ENCODE measurements at regions of chr7 and their contacts with region 1.

Region 1: DNA sequence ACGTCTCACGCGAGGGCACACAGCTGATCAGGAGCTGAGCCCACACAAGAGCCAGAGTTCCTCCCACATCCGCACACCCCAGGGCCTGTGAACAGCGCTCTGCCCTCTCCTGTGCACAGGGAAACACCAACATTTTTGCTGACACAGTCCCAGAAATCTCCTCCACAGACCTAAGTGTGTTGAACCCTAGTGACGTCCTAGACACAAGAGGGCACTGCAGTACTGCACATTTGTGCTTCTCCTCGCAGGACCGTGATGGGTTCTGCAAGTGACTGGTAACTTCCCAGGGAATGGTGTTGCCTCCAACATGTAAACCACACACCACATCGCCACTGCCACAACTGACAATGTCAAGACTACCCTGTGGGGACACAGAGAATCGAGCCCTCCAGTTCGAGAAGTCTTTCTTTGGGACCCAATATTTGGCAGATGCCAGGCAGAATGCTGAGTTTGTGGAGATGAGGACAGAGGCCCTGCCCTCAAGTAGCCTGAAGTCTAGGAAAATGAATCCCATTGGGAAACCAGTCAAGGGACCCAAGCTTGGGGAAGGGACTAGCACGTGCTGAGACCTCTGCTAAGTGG is 170.3 kb downstream of the PAXIP1 start:
- DNase-seq: no peak
- ATAC-seq: peak; percentile 86
- H3K4me3 ChIP-seq: no peak overlapping the region
- H3K27ac ChIP-seq: no peak overlapping the region
- H3K4me1 ChIP-seq: peaks cover 4% of the 10 kb centered on the region
- H3K27me3 ChIP-seq: no peaks in the 10 kb centered on the region; a peak in 1 of 4 replicates
- CTCF ChIP-seq: peak; percentile 32 to 65 (median 38); a peak in 4 of 6 replicates
- EP300 ChIP-seq: no peak
- POLR2A ChIP-seq: no peak
- RAD21 ChIP-seq: peak; percentile 52

Region 2: DNA sequence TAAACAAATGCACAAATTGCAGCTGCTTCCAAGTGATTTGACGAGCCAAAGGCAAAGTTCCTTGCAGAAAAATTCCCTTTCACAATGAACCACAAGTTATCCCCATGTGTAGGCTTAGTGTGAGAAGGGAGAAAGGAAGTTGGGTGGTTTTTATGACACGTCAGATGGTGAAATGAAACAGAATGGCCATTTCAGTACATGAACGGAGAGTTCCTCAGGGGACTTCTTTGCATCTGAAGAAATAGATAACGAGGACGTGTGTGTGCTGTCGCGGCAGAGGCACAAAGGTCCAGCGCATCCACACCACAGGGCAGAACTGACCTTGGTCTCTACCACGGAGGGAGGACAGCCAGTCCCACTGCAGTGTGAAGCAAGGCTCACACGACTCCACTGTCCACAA is 34.4 kb after region 1 on chr7:
- CTCF ChIA-PET with region 1: interaction called, 3 read pairs
- POLR2A ChIA-PET with region 1: no interaction called
- RAD21 ChIA-PET with region 1: interaction called, 3 read pairs
- SMC1A ChIA-PET with region 1: interaction called, 13 read pairs
- in situ Hi-C with region 1: no loop called
- intact Hi-C with region 1: loop called (anchors 1 kb)
- DNase-seq: peak; percentile 59
- ATAC-seq: peak; percentile 80
- H3K4me3 ChIP-seq: no peak overlapping the region
- H3K27ac ChIP-seq: no peak overlapping the region
- H3K4me1 ChIP-seq: peaks cover 8% of the 10 kb centered on the region
- H3K27me3 ChIP-seq: no peaks in the 10 kb centered on the region
- CTCF ChIP-seq: no peak
- EP300 ChIP-seq: peak; percentile 58 to 77; a peak in 2 of 4 replicates
- POLR2A ChIP-seq: no peak
- RAD21 ChIP-seq: no peak

Region 3: GRCh38 chr7:154953006-154953684 is 120.5 kb after region 1 on chr7:
- CTCF ChIA-PET with region 1: interaction called, 4 read pairs
- POLR2A ChIA-PET with region 1: no interaction called
- RAD21 ChIA-PET with region 1: no interaction called
- SMC1A ChIA-PET with region 1: interaction called, 4 read pairs
- in situ Hi-C with region 1: no loop called
- intact Hi-C with region 1: loop called (anchors 2 kb)
- DNase-seq: no peak
- ATAC-seq: peak; percentile 87
- H3K4me3 ChIP-seq: no peak overlapping the region
- H3K27ac ChIP-seq: no peak overlapping the region
- H3K4me1 ChIP-seq: no peaks in the 10 kb centered on the region
- H3K27me3 ChIP-seq: no peaks in the 10 kb centered on the region
- CTCF ChIP-seq: peak; percentile 54 to 68 (median 63)
- EP300 ChIP-seq: no peak
- POLR2A ChIP-seq: no peak
- RAD21 ChIP-seq: 0 out of 2 replicates have a peak, but pooled peaks have one; percentile 25

Region 4: GRCh38 chr7:155020996-155021395 is 188.3 kb after region 1 on chr7:
- CTCF ChIA-PET with region 1: no interaction called
- POLR2A ChIA-PET with region 1: no interaction called
- RAD21 ChIA-PET with region 1: no interaction called
- SMC1A ChIA-PET with region 1: no interaction called
- in situ Hi-C with region 1: no loop called
- intact Hi-C with region 1: no loop called
- DNase-seq: no peak
- ATAC-seq: no peak
- H3K4me3 ChIP-seq: no peak overlapping the region
- H3K27ac ChIP-seq: no peak overlapping the region
- H3K4me1 ChIP-seq: no peaks in the 10 kb centered on the region
- H3K27me3 ChIP-seq: no peaks in the 10 kb centered on the region
- CTCF ChIP-seq: no peak
- EP300 ChIP-seq: no peak
- POLR2A ChIP-seq: no peak
- RAD21 ChIP-seq: no peak

Region 5: DNA sequence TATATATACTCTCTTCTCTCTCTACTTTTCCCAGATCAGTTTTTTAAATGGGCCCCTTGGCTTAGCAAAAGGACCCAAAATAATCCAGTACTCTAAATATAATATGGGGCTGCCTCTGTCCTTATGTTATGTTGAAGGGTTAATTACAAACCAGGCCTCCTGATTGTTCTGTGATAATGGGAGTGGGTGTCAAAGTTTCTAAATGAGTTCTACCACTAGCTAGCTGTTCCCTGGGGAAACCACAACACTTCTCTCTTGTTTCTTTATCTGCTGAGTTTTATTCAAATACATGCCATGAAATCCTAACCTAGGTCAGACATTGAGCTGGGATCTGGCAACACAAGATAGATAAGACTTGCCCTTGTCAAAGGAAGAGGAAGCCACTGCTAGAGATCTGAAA is 241.3 kb after region 1 on chr7:
- CTCF ChIA-PET with region 1: no interaction called
- POLR2A ChIA-PET with region 1: no interaction called
- RAD21 ChIA-PET with region 1: no interaction called
- SMC1A ChIA-PET with region 1: no interaction called
- in situ Hi-C with region 1: no loop called
- intact Hi-C with region 1: no loop called
- DNase-seq: no peak
- ATAC-seq: no peak
- H3K4me3 ChIP-seq: no peak overlapping the region
- H3K27ac ChIP-seq: no peak overlapping the region
- H3K4me1 ChIP-seq: no peaks in the 10 kb centered on the region
- H3K27me3 ChIP-seq: no peaks in the 10 kb centered on the region
- CTCF ChIP-seq: no peak
- EP300 ChIP-seq: no peak
- POLR2A ChIP-seq: no peak
- RAD21 ChIP-seq: no peak

Region 6: GRCh38 chr7:155298834-155299534 is 466.3 kb after region 1 on chr7:
- CTCF ChIA-PET with region 1: interaction called, 3 read pairs
- POLR2A ChIA-PET with region 1: no interaction called
- RAD21 ChIA-PET with region 1: no interaction called
- SMC1A ChIA-PET with region 1: no interaction called
- in situ Hi-C with region 1: no loop called
- intact Hi-C with region 1: loop called (anchors 2 kb)
- DNase-seq: peak; percentile 92
- ATAC-seq: peak; percentile 85
- H3K4me3 ChIP-seq: peak overlapping the region; percentile 94
- H3K27ac ChIP-seq: peak overlapping the region; percentile 88
- H3K4me1 ChIP-seq: peaks cover 6% of the 10 kb centered on the region
- H3K27me3 ChIP-seq: no peaks in the 10 kb centered on the region
- CTCF ChIP-seq: no peak
- EP300 ChIP-seq: peak; percentile 43 to 57; a peak in 3 of 4 replicates
- POLR2A ChIP-seq: peak; percentile 84
- RAD21 ChIP-seq: no peak